A673 (cell line): ENCODE measurements at regions of chr20 and their contacts with region 1.

Region 1: DNA sequence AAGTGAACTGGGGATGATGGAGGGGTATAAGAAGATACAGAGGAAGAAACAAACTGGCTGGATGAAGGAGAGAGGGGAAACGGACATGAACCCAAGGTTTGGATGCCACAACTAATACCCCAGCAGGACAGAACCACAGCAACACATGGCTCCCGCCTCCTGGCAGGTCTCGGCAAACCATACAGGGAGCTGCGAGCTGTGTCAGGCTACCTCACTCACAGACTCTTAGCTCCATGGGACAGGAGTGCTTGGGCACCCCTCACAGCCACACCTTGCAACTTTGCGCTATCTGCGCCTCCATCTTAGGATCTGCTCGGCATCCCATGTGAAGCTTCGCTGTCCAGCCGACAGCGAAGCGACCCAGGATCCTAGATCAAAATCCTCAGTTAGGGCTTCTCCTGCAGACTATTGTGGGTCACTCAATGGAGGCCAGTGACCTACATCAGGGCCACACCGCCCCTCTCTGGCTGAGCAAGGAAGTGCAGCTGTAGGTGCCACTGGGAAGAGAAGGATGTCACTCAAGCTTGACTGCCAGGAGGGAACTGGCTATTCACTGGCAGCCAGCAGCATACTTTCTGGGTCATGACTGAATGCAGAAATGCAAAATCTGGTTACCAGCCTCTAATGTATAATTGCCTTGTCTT is 174.4 kb upstream of the RIN2 start:
- DNase-seq: peak; percentile 85
- H3K4me3 ChIP-seq: no peak overlapping the region
- H3K27ac ChIP-seq: peak overlapping the region; percentile 47
- H3K4me1 ChIP-seq: peaks cover 33% of the 10 kb centered on the region
- H3K27me3 ChIP-seq: no peaks in the 10 kb centered on the region
- CTCF ChIP-seq: peak; percentile 95

Region 2: GRCh38 chr20:19130081-19130984 is 453.3 kb before region 1 on chr20:
- CTCF ChIA-PET with region 1: no interaction called
- POLR2A ChIA-PET with region 1: no interaction called
- intact Hi-C with region 1: no loop called
- DNase-seq: no peak
- H3K4me3 ChIP-seq: no peak overlapping the region
- H3K27ac ChIP-seq: no peak overlapping the region
- H3K4me1 ChIP-seq: no peaks in the 10 kb centered on the region
- H3K27me3 ChIP-seq: no peaks in the 10 kb centered on the region
- CTCF ChIP-seq: no peak

Region 3: DNA sequence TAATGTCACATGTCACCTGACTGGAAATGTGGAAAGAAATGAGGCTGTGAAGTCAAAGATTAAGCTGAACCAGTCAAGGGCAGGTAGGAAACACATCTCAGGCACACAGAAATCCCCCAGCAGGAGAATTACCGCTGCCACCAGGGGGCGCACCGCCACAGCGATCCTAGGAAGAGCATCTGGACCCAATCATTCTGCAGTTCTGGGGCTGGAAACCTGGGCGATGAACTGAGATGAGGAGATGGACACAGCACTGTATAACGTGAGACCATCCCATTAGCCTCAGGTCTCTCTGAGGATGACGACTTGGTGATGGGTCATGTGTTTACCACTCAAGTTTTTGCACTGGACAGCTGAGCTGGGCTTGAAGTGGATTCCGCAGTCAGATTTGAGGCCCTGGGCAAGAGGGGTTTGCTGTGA is 377.7 kb before region 1 on chr20:
- CTCF ChIA-PET with region 1: interaction called, 21 read pairs
- POLR2A ChIA-PET with region 1: no interaction called
- intact Hi-C with region 1: no loop called
- DNase-seq: peak; percentile 81
- H3K4me3 ChIP-seq: no peak overlapping the region
- H3K27ac ChIP-seq: no peak overlapping the region
- H3K4me1 ChIP-seq: peaks cover 53% of the 10 kb centered on the region
- H3K27me3 ChIP-seq: no peaks in the 10 kb centered on the region
- CTCF ChIP-seq: peak; percentile 99

Region 4: DNA sequence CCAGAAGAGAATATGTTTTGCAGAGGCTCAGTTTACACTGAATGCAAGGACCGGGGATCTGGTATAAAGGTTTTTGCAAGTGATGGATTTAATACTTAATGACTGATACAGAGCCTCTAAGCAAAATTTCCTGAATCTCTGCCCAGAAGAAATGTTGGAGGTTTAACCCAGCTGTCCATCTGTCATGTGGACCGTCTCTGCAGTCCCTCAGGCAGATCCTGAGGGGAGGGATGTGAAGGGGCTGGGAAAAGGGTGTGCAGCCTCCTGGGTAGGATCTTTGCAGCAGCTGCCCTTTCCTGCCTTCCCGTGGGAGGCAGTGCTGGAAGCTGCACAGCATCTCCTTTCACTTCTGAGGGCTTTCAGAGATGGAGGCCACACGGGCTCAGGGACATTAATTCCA is 164.3 kb before region 1 on chr20:
- CTCF ChIA-PET with region 1: no interaction called
- POLR2A ChIA-PET with region 1: no interaction called
- intact Hi-C with region 1: loop called (anchors 10 kb)
- DNase-seq: no peak
- H3K4me3 ChIP-seq: no peak overlapping the region
- H3K27ac ChIP-seq: no peak overlapping the region
- H3K4me1 ChIP-seq: peaks cover 32% of the 10 kb centered on the region
- H3K27me3 ChIP-seq: no peaks in the 10 kb centered on the region
- CTCF ChIP-seq: no peak

Region 5: DNA sequence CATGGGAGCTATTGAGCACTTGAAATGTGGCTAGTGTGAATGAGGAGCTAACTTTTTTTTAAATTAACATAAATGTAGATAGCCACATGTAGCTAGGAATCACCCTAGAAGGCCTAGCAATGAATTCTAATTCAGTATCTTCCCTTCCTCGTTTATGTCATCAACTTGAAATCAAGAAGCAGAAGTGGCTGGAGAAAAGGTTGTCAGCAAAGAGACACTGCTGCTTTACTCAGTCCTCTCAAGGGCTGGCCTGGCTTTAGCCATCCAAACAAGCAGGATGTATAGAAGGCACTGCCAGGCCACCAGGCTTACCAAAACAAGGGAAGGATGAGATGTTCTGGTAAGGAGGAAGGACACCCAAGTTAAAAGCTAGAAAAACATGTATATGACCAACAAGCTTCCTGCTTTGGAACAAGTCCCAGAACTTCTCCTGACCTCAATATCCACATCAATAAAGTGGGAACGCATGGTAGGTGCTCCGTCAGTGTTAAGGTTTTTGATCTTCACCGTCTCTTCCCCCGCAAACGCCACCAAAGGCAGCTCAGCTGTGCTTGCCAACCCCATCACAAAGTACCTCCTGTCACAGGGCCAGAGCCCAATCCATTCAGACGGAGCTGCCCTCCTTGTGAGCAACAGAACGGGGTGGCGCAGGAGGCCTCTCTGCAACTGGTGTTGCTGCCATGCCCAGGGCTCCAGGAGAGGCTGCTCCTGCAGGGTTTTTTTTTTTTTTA is 61.4 kb before region 1 on chr20:
- CTCF ChIA-PET with region 1: interaction called, 3 read pairs
- POLR2A ChIA-PET with region 1: no interaction called
- intact Hi-C with region 1: loop called (anchors 5 kb)
- DNase-seq: no peak
- H3K4me3 ChIP-seq: no peak overlapping the region
- H3K27ac ChIP-seq: no peak overlapping the region
- H3K4me1 ChIP-seq: peaks cover 50% of the 10 kb centered on the region
- H3K27me3 ChIP-seq: no peaks in the 10 kb centered on the region
- CTCF ChIP-seq: no peak